MCF 10A (cell line): ENCODE measurements at regions of chr3 and their contacts with region 1.

Region 1: DNA sequence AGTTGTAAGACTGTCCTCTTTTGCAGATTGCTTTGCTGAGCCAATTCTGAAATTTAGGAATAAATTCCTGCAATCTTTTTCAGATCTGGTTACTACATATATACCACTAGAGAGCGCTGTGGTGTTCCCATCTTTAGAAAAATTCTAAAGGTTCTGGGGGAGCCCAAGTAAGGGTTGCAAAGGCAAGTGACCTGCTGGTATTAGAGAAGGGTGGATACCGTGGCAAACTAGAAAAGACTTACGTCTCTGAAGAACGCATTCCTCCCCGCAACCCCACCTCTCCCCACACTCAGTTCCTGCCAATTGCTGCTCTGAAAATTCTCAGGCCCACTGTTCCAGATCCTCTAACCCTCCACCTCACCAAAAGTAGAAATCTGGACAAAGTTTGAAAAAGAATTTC is 48.5 kb downstream of the EFHB start:
- DNase-seq: peak; percentile 45
- H3K4me3 Mint-ChIP-seq: no peak overlapping the region
- H3K27ac Mint-ChIP-seq: no peak overlapping the region
- H3K4me1 Mint-ChIP-seq: peaks cover 15% of the 10 kb centered on the region
- H3K27me3 Mint-ChIP-seq: no peaks in the 10 kb centered on the region
- CTCF ChIP-seq: peak; percentile 38

Region 2: GRCh38 chr3:19901337-19901736 is 15.9 kb after region 1 on chr3:
- CTCF ChIA-PET with region 1: interaction called, 19 read pairs
- POLR2A ChIA-PET with region 1: interaction called, 6 read pairs
- intact Hi-C with region 1: no loop called
- DNase-seq: no peak
- H3K4me3 Mint-ChIP-seq: no peak overlapping the region
- H3K27ac Mint-ChIP-seq: peak overlapping the region; percentile 27
- H3K4me1 Mint-ChIP-seq: peaks cover 6% of the 10 kb centered on the region
- H3K27me3 Mint-ChIP-seq: no peaks in the 10 kb centered on the region
- CTCF ChIP-seq: no peak

Region 3: DNA sequence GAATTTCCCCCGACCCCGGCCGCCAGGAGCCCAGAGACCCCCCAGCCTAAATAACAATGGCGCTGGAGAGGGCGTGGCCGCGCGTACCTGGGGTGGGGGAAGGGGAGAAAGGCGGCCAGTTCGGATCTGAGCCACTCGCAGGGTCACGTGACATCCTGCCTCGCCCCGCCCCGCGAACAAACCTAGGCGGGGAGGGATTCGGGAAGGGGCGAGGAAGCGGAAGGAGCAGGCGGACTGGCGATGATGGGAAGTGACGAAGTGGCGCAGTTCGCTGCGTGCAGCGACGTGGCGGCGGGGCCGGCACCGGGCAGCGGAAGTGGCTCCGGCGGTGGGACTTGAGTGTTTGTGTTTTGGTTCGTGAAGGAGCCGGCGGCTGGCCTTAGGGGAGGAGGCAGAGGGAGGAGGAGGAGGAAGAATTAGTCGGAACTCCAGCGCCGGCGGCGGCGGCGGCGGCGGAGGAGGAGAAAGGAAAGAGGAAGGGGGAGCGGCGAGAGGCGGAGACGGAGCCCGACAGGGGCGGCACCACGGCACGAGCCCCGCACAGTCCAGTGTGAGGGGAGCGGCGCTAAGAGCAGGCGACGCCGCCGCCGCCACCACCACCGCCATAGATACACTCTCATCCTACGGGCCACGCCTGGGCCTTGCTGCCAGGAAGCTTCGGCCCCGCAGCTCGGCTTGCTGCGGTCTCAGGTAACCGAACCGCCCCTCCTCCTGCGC is 61.5 kb after region 1 on chr3 and contains the start of gene RAB5A:
- CTCF ChIA-PET with region 1: interaction called, 3 read pairs
- POLR2A ChIA-PET with region 1: interaction called, 15 read pairs
- intact Hi-C with region 1: loop called (anchors 1 kb)
- DNase-seq: peak; percentile 98
- H3K4me3 Mint-ChIP-seq: peak within 1 kb of the TSS; percentile 85
- H3K27ac Mint-ChIP-seq: peak within 1 kb of the TSS; percentile 98
- H3K4me1 Mint-ChIP-seq: peaks cover 13% of the 10 kb centered on the region
- H3K27me3 Mint-ChIP-seq: no peaks in the 10 kb centered on the region
- CTCF ChIP-seq: no peak
- total RNA-seq, gene RAB5A: 89.8 and 102 TPM in 2 replicates

Region 4: GRCh38 chr3:20096135-20096685 is 210.7 kb after region 1 on chr3:
- CTCF ChIA-PET with region 1: no interaction called
- POLR2A ChIA-PET with region 1: no interaction called
- intact Hi-C with region 1: no loop called
- DNase-seq: peak; percentile 34
- H3K4me3 Mint-ChIP-seq: no peak overlapping the region
- H3K27ac Mint-ChIP-seq: peak overlapping the region; percentile 10
- H3K4me1 Mint-ChIP-seq: no peaks in the 10 kb centered on the region
- H3K27me3 Mint-ChIP-seq: no peaks in the 10 kb centered on the region
- CTCF ChIP-seq: no peak

Region 5: GRCh38 chr3:20141851-20142250 is 256.4 kb after region 1 on chr3:
- CTCF ChIA-PET with region 1: no interaction called
- POLR2A ChIA-PET with region 1: no interaction called
- intact Hi-C with region 1: no loop called
- DNase-seq: no peak
- H3K4me3 Mint-ChIP-seq: no peak overlapping the region
- H3K27ac Mint-ChIP-seq: no peak overlapping the region
- H3K4me1 Mint-ChIP-seq: no peaks in the 10 kb centered on the region
- H3K27me3 Mint-ChIP-seq: no peaks in the 10 kb centered on the region
- CTCF ChIP-seq: no peak

Region 6: GRCh38 chr3:20185701-20186598 is 300.5 kb after region 1 on chr3 and contains the start of gene SGO1:
- CTCF ChIA-PET with region 1: no interaction called
- POLR2A ChIA-PET with region 1: interaction called, 5 read pairs
- intact Hi-C with region 1: loop called (anchors 5 kb)
- DNase-seq: peak; percentile 98
- H3K4me3 Mint-ChIP-seq: no peak within 1 kb of the TSS
- H3K27ac Mint-ChIP-seq: no peak within 1 kb of the TSS
- H3K4me1 Mint-ChIP-seq: no peaks in the 10 kb centered on the region
- H3K27me3 Mint-ChIP-seq: no peaks in the 10 kb centered on the region
- CTCF ChIP-seq: no peak
- total RNA-seq, gene SGO1: 6.8 and 12.2 TPM in 2 replicates